HCT116 (cell line): ENCODE measurements at regions of chr11 and their contacts with region 1.

Region 1: DNA sequence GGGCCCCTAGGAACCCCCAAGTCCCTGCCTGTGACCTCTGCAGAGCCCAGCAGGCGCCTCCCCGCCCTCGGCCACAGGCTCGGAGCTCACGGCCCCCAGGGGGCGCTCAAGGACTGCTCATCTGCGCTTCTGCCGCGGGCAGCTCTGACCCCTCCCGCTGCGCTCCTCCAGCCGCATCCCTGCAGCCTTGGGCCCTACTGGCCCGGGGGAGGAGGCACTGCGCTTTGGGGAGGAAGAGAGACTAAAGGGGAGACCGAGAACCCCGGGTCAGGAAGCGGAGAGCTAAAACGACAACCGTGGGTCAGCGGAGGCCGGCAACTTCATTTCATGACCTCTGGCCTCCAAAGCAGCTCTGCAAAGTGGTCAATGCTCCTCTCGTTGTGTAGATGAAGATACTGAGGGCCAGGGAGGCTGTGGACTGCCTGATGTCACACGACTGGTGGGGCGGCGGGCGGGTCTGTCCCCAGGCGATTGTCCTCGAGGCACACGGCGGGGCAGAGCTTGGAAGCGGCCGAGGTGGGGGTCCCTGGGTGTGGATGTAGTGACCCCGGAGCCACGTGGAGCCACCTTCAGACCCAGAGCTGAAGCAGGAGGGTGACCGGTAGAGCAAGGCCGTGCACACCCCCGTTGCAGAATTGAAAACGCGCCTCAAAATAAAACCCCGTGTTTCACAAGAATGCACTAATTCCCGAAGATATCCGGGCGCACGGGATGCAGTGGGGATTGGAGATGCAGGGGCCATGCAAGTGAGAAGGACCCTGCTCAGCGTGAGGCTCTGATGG is 2.7 kb upstream of the KRTAP5-6 start:
- DNase-seq: peak; percentile 57
- ATAC-seq: peak; percentile 90
- H3K4me3 ChIP-seq: peak overlapping the region; percentile 69 to 70
- H3K27ac ChIP-seq: peak overlapping the region; percentile 63; the same call in 1 of the 2 replicates
- H3K4me1 ChIP-seq: peaks cover 0 to 12% of the 10 kb centered on the region in 2 experiments; a peak in 2 of 4 replicates
- H3K27me3 ChIP-seq: no peaks in the 10 kb centered on the region
- CTCF ChIP-seq: peak; percentile 83 to 97 (median 87)
- POLR2A ChIP-seq: no peak
- RAD21 ChIP-seq: peak; percentile 100

Region 2: GRCh38 chr11:995752-996420 is 698.4 kb before region 1 on chr11:
- CTCF ChIA-PET with region 1: no interaction called
- POLR2A ChIA-PET with region 1: no interaction called
- RAD21 ChIA-PET with region 1: no interaction called
- intact Hi-C with region 1: no loop called
- DNase-seq: no peak
- ATAC-seq: no peak
- H3K4me3 ChIP-seq: no peak overlapping the region
- H3K27ac ChIP-seq: no peak overlapping the region
- H3K4me1 ChIP-seq: peaks cover 0 to 8% of the 10 kb centered on the region in 2 experiments; a peak in 1 of 4 replicates
- H3K27me3 ChIP-seq: no peaks in the 10 kb centered on the region
- CTCF ChIP-seq: no peak
- POLR2A ChIP-seq: no peak
- RAD21 ChIP-seq: no peak

Region 3: GRCh38 chr11:1428762-1429316 is 265.4 kb before region 1 on chr11:
- CTCF ChIA-PET with region 1: no interaction called
- POLR2A ChIA-PET with region 1: no interaction called
- RAD21 ChIA-PET with region 1: no interaction called
- intact Hi-C with region 1: no loop called
- DNase-seq: no peak
- ATAC-seq: no peak
- H3K4me3 ChIP-seq: no peak overlapping the region
- H3K27ac ChIP-seq: no peak overlapping the region
- H3K4me1 ChIP-seq: no peaks in the 10 kb centered on the region
- H3K27me3 ChIP-seq: no peaks in the 10 kb centered on the region
- CTCF ChIP-seq: no peak
- POLR2A ChIP-seq: no peak
- RAD21 ChIP-seq: no peak

Region 4: GRCh38 chr11:1682225-1682905 is 11.9 kb before region 1 on chr11:
- CTCF ChIA-PET with region 1: interaction called, 10 read pairs
- POLR2A ChIA-PET with region 1: no interaction called
- RAD21 ChIA-PET with region 1: no interaction called
- intact Hi-C with region 1: no loop called
- DNase-seq: no peak
- ATAC-seq: no peak
- H3K4me3 ChIP-seq: no peak overlapping the region
- H3K27ac ChIP-seq: no peak overlapping the region
- H3K4me1 ChIP-seq: peaks cover 4 to 5% of the 10 kb centered on the region in 2 experiments; a peak in 3 of 4 replicates
- H3K27me3 ChIP-seq: no peaks in the 10 kb centered on the region
- CTCF ChIP-seq: no peak
- POLR2A ChIP-seq: no peak
- RAD21 ChIP-seq: no peak

Region 5: DNA sequence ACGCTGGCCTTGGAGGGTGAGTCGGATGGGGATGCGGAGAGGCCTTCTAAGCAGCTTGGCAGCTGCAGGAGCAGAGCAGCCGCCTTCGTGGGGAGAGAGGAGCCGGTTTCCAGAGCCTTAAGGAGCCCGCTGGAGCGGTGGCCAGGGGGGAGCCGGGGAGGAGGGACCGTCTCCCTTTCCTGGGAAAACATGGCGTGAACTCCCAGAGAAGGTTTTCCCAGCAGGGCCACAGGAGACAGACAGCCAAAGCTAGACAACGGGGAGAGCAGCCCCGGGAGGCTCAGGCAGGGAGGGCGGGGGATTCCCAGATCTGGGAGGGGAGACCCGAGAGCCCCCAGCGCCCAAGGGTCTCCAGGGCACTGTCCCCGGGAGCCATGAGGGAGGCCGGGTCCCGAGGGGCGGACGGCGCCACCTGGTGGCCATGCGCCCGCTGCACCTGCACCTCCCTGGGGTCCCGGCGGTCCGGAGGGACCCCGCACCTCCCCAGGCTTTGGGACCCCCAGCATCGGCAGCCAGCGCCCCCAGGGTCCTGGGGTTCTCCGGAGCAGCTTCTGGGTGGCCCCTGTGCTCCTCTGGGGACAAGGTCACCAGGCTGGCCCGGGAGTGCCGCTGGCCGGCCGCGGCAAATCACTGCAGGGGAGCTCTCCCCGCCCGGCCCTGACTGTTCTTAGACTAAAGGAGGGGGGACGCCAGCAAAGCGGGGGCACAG is 138.1 kb after region 1 on chr11:
- CTCF ChIA-PET with region 1: interaction called, 259 read pairs
- POLR2A ChIA-PET with region 1: interaction called, 26 read pairs
- RAD21 ChIA-PET with region 1: interaction called, 35 to 63 read pairs
- intact Hi-C with region 1: loop called (anchors 1 kb)
- DNase-seq: no peak
- ATAC-seq: peak; percentile 54
- H3K4me3 ChIP-seq: peak overlapping the region; percentile 31 to 55
- H3K27ac ChIP-seq: no peak overlapping the region; the same call in 1 of the 2 replicates
- H3K4me1 ChIP-seq: peaks cover 57 to 82% of the 10 kb centered on the region in 2 experiments
- H3K27me3 ChIP-seq: no peaks in the 10 kb centered on the region
- CTCF ChIP-seq: peak in 2 of 3 experiments; percentile 94 to 96; a peak in 4 of 6 replicates
- POLR2A ChIP-seq: no peak
- RAD21 ChIP-seq: no peak

Region 6: GRCh38 chr11:1882519-1883238 is 188.4 kb after region 1 on chr11:
- CTCF ChIA-PET with region 1: interaction called, 12 read pairs
- POLR2A ChIA-PET with region 1: no interaction called
- RAD21 ChIA-PET with region 1: no interaction called
- intact Hi-C with region 1: no loop called
- DNase-seq: peak; percentile 43
- ATAC-seq: peak; percentile 99
- H3K4me3 ChIP-seq: no peak overlapping the region
- H3K27ac ChIP-seq: no peak overlapping the region
- H3K4me1 ChIP-seq: no peaks in the 10 kb centered on the region
- H3K27me3 ChIP-seq: peaks cover 4% of the 10 kb centered on the region; the same call in 1 of the 2 replicates
- CTCF ChIP-seq: peak; percentile 88 to 92 (median 91)
- POLR2A ChIP-seq: no peak
- RAD21 ChIP-seq: peak; percentile 95